ENCODE measurements at regions of chr7 and their contacts with region 1.

Region 1: GRCh38 chr7:37269711-37270508 is 178.8 kb downstream of the ELMO1 start:
- DNase-seq: no peak
- H3K4me3 Mint-ChIP-seq: no peak overlapping the region
- H3K27ac Mint-ChIP-seq: no peak overlapping the region
- H3K4me1 Mint-ChIP-seq: peaks cover 37% of the 10 kb centered on the region
- H3K27me3 Mint-ChIP-seq: no peaks in the 10 kb centered on the region

Region 2: DNA sequence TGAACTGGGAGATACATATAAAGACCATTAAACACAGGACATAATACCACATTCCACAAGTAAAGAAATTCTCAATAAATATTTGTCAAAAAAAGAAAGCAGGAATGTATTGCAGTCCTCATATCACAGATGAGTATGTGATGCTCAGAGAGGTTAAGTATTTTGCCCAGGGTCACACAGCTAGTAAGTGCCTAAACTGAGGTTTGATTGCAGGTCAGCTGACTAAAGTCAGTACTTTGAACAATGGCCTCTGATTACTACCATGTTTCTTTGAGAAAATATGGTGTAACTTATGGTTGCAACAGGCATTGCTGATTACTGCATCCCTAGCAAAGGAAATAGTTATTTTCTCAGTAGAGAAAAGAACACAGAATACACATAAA is 88.4 kb before region 1 on chr7:
- CTCF ChIA-PET with region 1: no interaction called
- POLR2A ChIA-PET with region 1: no interaction called
- DNase-seq: no peak
- H3K4me3 Mint-ChIP-seq: no peak overlapping the region
- H3K27ac Mint-ChIP-seq: no peak overlapping the region
- H3K4me1 Mint-ChIP-seq: peaks cover 16% of the 10 kb centered on the region
- H3K27me3 Mint-ChIP-seq: no peaks in the 10 kb centered on the region

Region 3: DNA sequence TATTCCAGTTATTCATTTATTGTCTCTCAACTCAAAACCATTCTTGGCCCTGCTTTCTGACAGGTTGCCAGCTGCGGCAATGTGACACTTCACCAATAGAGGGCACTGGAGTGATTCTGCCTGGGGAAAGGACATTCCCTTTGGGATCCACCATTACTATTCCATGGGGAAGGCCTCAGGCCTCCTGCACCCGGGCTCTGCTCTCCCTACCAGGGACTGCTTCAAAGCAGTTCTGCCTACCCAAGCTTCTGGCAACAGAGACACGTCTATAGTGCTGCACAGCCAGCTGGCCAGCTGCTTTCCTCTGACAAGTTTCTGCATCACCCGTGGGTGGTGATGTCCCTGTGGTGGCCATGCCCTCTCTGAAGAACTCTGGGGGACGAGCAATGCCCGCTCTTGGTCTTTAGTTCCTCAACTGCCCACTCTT is 14.9 kb after region 1 on chr7:
- CTCF ChIA-PET with region 1: interaction called, 16 read pairs
- POLR2A ChIA-PET with region 1: interaction called, 4 read pairs
- DNase-seq: peak; percentile 42
- H3K4me3 Mint-ChIP-seq: no peak overlapping the region
- H3K27ac Mint-ChIP-seq: no peak overlapping the region
- H3K4me1 Mint-ChIP-seq: peaks cover 37% of the 10 kb centered on the region
- H3K27me3 Mint-ChIP-seq: no peaks in the 10 kb centered on the region

Region 4: GRCh38 chr7:37336259-37336658 is 66.3 kb after region 1 on chr7:
- CTCF ChIA-PET with region 1: no interaction called
- POLR2A ChIA-PET with region 1: no interaction called
- DNase-seq: peak; percentile 47
- H3K4me3 Mint-ChIP-seq: peak overlapping the region; percentile 58
- H3K27ac Mint-ChIP-seq: peak overlapping the region; percentile 83
- H3K4me1 Mint-ChIP-seq: peaks cover 91% of the 10 kb centered on the region
- H3K27me3 Mint-ChIP-seq: no peaks in the 10 kb centered on the region